Astrocyte of the cerebellum (primary cell): ENCODE measurements at regions of chr7 and their contacts with region 1.

Region 1: GRCh38 chr7:128045766-128046165 is 14.5 kb upstream of the LRRC4 start:
- DNase-seq: no peak
- H3K4me3 ChIP-seq: no peak overlapping the region
- CTCF ChIP-seq: no peak

Region 2: DNA sequence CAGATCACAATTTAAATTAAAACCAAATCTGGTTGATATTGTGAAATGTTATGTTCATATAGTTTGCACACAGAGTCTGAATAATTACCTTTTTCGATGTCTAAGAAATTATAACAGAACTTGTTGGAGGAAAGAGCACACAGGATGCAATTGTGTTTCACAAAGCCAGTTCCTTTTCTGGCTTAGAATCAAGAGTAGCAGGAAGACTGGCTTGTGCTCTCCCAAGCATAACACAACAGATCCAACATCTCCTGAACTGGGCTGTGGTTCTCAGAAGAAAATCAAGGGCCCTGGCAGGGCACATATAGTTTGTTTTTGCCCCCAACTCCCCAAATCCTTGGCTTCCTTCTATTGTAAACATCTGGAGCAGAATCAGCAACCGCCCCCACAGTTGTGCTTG is 77.2 kb before region 1 on chr7:
- in situ Hi-C with region 1: no loop called
- DNase-seq: no peak
- H3K4me3 ChIP-seq: no peak overlapping the region
- CTCF ChIP-seq: no peak

Region 3: DNA sequence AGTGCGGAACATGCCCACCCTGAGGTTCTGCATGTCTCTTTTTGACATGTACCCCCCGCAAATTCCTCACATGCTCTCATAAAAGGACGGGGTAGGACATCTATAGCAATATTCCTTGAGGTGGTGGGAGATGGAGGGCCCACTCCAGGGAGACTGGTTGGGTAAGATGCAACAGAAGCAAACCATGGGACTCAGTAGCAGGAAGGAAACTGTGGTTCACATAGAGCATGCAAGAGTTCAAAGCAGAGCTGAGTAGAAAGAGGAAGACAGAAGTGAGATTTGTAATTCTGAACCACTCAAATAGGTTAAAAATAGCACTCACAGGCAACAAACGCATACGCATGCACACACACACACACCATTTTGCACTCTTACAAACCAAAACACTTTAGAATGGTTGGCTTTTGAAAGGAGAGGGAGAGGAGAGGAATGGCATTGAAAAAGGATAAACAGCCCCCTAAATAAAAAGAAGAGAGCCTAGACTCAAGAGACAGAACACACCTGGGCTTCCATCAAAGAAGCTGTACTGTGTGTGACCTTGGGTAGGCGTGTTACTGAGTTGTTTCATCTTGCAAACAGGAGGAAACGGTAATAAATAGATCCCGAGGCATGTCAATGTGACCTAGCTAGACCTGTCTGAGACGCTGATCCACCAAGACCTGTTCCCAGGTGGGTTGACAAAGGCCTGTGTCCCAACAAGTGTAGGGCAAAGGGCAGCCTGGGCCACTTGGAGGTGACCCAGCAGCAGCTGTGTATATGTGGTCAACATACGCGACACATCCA is 63.1 kb after region 1 on chr7:
- in situ Hi-C with region 1: loop called (anchors 5 kb)
- DNase-seq: no peak
- H3K4me3 ChIP-seq: no peak overlapping the region
- CTCF ChIP-seq: no peak